Caco-2 (cell line): ENCODE measurements at regions of chr2 and their contacts with region 1.

Region 1: GRCh38 chr2:151713291-151713903 is 20.9 kb downstream of the NEB start:
- DNase-seq: no peak
- H3K4me3 ChIP-seq: no peak overlapping the region
- H3K4me3 Mint-ChIP-seq: no peak overlapping the region
- H3K27ac Mint-ChIP-seq: no peak overlapping the region
- H3K4me1 ChIP-seq: no peaks in the 10 kb centered on the region
- H3K4me1 Mint-ChIP-seq: no peaks in the 10 kb centered on the region
- H3K27me3 ChIP-seq: no peaks in the 10 kb centered on the region
- H3K27me3 Mint-ChIP-seq: no peaks in the 10 kb centered on the region
- CTCF ChIP-seq: no peak

Region 2: GRCh38 chr2:151071382-151071781 is 642.0 kb before region 1 on chr2:
- CTCF ChIA-PET with region 1: no interaction called
- POLR2A ChIA-PET with region 1: no interaction called
- intact Hi-C with region 1: no loop called
- DNase-seq: peak in 1 of 2 experiments; percentile 26
- H3K4me3 ChIP-seq: no peak overlapping the region
- H3K4me3 Mint-ChIP-seq: no peak overlapping the region
- H3K27ac Mint-ChIP-seq: no peak overlapping the region
- H3K4me1 ChIP-seq: no peaks in the 10 kb centered on the region
- H3K4me1 Mint-ChIP-seq: no peaks in the 10 kb centered on the region
- H3K27me3 ChIP-seq: peaks cover 1% of the 10 kb centered on the region; the same call in 1 of the 2 replicates
- H3K27me3 Mint-ChIP-seq: no peaks in the 10 kb centered on the region
- CTCF ChIP-seq: peak in 1 of 2 experiments; percentile 41

Region 3: GRCh38 chr2:151681051-151681450 is 32.3 kb before region 1 on chr2:
- CTCF ChIA-PET with region 1: no interaction called
- POLR2A ChIA-PET with region 1: no interaction called
- intact Hi-C with region 1: loop called (anchors 1 kb)
- DNase-seq: no peak
- H3K4me3 ChIP-seq: no peak overlapping the region
- H3K4me3 Mint-ChIP-seq: no peak overlapping the region
- H3K27ac Mint-ChIP-seq: no peak overlapping the region
- H3K4me1 ChIP-seq: no peaks in the 10 kb centered on the region
- H3K4me1 Mint-ChIP-seq: no peaks in the 10 kb centered on the region
- H3K27me3 ChIP-seq: no peaks in the 10 kb centered on the region
- H3K27me3 Mint-ChIP-seq: no peaks in the 10 kb centered on the region
- CTCF ChIP-seq: no peak